ENCODE measurements at regions of chr5 and their contacts with region 1.

Region 1: DNA sequence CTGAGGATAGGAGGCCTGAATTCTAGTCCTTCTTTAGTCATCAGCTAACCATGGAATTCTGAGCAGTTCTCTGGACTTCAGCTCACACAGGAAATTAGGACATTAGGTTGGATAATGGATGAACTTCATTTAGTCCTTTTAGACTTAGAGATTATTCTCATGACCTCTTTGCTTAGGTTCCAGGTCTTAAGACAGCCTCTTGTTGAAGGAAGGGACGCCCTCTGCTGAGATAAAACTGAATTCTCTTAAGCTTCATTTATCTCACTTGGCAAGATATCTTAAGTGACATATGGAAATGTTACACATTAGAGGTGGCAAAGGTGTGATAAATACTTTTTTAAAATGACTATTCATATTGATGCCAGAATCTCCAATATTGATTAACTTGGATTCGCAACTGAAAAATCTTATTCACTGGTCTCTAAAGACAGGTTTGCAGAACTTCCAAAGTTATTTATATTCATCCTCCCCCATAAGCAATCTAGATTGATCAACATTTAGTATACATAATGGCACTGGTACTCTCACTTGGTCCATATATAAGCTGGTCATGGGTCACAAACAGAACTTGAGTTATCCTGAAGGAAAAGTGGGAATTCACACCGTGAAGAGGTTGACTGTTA is 16.9 kb upstream of the ZNF366 start:
- DNase-seq: no peak
- H3K4me3 ChIP-seq: no peak overlapping the region
- H3K27ac ChIP-seq: no peak overlapping the region
- H3K4me1 ChIP-seq: no peaks in the 10 kb centered on the region
- H3K27me3 ChIP-seq: no peaks in the 10 kb centered on the region
- CTCF ChIP-seq: peak in 5 of 6 experiments; percentile 49 to 79 (median 57)
- POLR2A ChIP-seq: no peak

Region 2: DNA sequence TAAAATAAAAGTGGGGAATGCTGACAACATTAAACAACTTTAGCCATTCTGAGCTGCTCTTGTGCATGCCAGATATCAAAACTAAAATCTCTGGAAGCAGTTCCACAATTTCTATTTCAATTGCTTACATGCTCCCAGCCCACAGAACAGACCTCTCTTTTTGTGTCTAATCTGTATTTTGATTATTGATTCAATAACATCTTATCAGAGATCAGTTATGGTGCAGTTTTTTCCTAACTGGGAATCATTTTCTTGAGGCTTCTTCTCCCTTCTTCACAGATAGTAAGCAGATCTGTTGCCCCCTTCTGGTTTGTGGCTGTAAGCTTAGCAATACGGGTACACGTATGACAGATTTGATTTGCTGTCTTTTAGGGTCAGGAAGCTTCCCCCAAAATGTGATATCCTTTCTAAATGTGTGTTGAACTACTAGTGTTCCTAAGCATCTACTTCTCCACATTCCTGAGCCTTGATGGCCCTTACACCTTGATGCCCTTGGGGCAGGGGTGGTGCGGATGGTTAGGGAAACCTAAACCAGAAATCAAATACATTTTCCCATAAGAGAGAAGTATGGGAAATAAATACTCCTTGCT is 243.4 kb before region 1 on chr5:
- intact Hi-C with region 1: no loop called
- DNase-seq: no peak
- H3K4me3 ChIP-seq: no peak overlapping the region
- H3K27ac ChIP-seq: peak overlapping the region in 3 of 4 donors; percentile 57 to 72 (median 68)
- H3K4me1 ChIP-seq: peaks cover 0 to 33% (median 3%) of the 10 kb centered on the region in 3 donors
- H3K27me3 ChIP-seq: no peaks in the 10 kb centered on the region
- CTCF ChIP-seq: peak in 4 of 6 experiments; percentile 30 to 43 (median 36)
- POLR2A ChIP-seq: no peak

Region 3: GRCh38 chr5:72366324-72366976 is 157.6 kb before region 1 on chr5:
- intact Hi-C with region 1: loop called (anchors 10 kb)
- DNase-seq: no peak
- H3K4me3 ChIP-seq: no peak overlapping the region
- H3K27ac ChIP-seq: no peak overlapping the region
- H3K4me1 ChIP-seq: peaks cover 0 to 17% (median 5%) of the 10 kb centered on the region in 3 donors
- H3K27me3 ChIP-seq: no peaks in the 10 kb centered on the region
- CTCF ChIP-seq: peak; percentile 42 to 87 (median 78)
- POLR2A ChIP-seq: no peak

Region 4: GRCh38 chr5:72440207-72440638 is 83.8 kb before region 1 on chr5:
- intact Hi-C with region 1: no loop called
- DNase-seq: no peak
- H3K4me3 ChIP-seq: no peak overlapping the region
- H3K27ac ChIP-seq: peak overlapping the region in 3 of 4 donors; percentile 5 to 49 (median 36)
- H3K4me1 ChIP-seq: peaks cover 0 to 35% (median 7%) of the 10 kb centered on the region in 3 donors
- H3K27me3 ChIP-seq: no peaks in the 10 kb centered on the region
- CTCF ChIP-seq: no peak
- POLR2A ChIP-seq: no peak